Activated B cell treated with CpG ODN at 0.5 μM for 24 hours (primary cell): ENCODE measurements at regions of chr22 and their contacts with region 1.

Region 1: DNA sequence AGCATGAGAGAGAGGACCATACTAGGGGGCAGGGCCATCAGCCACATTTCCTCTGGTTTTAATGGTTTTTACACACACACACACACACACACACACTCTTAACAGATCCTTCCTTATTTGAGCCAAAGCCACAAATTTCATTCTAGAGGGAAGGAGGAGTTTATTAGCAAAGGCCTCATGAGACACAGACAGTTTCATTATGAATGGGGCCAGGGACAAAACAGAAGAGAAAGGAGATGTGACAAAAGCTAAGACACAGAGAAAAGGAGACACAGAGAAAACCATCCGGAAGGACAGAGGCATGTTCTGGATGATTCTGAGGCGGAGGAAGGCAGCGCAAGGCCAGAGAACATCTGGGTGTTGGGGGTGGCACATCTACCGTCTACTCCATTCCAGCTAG is 32.2 kb upstream of the ARFGAP3 start:
- DNase-seq: no peak
- ATAC-seq: peak; percentile 88
- H3K4me3 Mint-ChIP-seq: peak overlapping the region; percentile 77
- H3K27ac Mint-ChIP-seq: peak overlapping the region; percentile 90
- H3K4me1 Mint-ChIP-seq: peaks cover 68% of the 10 kb centered on the region
- H3K27me3 Mint-ChIP-seq: no peaks in the 10 kb centered on the region
- CTCF ChIP-seq: no peak

Region 2: DNA sequence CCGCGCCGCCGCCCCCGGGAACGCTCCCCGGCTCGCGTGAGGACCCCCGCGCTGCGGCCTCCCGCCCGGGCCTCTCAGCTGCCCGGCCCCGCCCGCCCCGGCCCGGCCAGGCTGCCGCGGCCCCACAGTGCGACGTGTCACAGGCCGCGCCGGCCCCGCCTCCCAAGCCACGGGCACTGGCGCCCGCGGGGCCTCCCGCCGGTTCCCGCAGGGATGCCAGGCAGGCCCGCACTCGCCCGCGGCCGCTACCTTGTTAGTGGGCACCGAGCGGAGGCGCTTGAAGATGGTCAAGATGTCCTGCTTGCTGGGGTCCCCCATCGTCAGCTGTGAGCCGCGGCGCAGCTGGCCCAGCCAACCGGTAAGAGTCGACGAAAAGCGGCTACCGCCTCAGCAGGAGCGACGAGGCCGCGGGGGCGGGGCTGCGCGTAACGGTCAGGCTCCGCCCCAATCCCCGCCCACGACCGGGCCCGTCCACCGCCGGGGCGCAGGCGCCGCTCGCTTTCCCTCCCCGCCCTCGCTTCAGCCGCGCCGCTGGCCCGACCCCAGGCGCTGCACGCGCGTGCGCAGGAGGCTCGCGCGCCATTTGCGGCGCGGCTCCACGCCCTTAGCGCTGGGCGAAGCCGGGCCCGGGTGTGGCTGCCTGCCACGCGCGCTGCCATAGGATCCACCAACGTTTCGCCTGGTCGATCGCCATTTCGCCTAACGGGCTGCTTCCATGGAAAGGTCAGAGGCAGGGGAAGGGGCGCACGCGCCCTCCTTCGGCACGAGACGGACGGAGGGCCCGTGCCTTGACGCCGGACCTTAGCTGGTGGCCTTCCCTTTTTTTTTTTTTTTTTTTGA is 32.2 kb before region 1 on chr22 and contains the start of gene ARFGAP3:
- CTCF ChIA-PET with region 1: no interaction called
- POLR2A ChIA-PET with region 1: interaction called, 4 read pairs
- intact Hi-C with region 1: loop called (anchors 2 kb)
- DNase-seq: peak; percentile 99
- ATAC-seq: peak; percentile 93
- H3K4me3 Mint-ChIP-seq: peak within 1 kb of the TSS; percentile 86
- H3K27ac Mint-ChIP-seq: peak within 1 kb of the TSS; percentile 80
- H3K4me1 Mint-ChIP-seq: peaks cover 35% of the 10 kb centered on the region
- H3K27me3 Mint-ChIP-seq: no peaks in the 10 kb centered on the region
- CTCF ChIP-seq: no peak
- total RNA-seq, gene ARFGAP3: 35.2 and 37.3 TPM in 2 replicates

Region 3: DNA sequence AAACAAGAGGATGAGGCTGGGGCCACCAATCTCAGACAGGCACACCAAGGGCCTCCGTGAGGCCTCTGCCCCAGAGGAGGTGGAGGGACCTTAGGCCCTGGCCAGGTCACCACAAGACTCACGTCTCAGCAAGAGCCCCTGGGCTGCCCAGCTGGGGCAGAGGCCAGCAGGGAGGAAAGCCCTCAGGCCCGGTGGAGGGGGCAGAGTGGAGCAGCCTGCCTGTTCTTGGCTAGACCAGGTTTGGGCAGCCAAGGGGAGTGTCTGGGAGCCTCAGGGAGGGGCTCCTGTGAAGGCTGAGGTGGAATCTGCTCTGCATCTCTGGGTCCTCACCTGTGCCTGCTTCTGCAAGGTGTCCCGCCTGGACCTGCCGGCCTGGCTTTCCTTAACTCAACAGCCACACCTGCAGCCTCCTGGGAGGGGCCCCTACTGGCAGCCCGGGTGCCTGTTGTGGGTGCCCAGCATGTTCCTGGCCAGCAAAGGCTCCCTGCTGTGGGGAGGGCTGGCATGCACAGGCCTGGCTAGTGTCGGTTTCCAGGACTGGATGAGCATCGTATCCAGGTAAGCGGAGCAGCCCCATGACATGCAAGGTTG is 285.7 kb after region 1 on chr22:
- CTCF ChIA-PET with region 1: no interaction called
- POLR2A ChIA-PET with region 1: no interaction called
- intact Hi-C with region 1: no loop called
- DNase-seq: no peak
- ATAC-seq: no peak
- H3K4me3 Mint-ChIP-seq: no peak overlapping the region
- H3K27ac Mint-ChIP-seq: no peak overlapping the region
- H3K4me1 Mint-ChIP-seq: no peaks in the 10 kb centered on the region
- H3K27me3 Mint-ChIP-seq: no peaks in the 10 kb centered on the region
- CTCF ChIP-seq: no peak